SK-N-SH (cell line): ENCODE measurements at regions of chr1 and their contacts with region 1.

Region 1: DNA sequence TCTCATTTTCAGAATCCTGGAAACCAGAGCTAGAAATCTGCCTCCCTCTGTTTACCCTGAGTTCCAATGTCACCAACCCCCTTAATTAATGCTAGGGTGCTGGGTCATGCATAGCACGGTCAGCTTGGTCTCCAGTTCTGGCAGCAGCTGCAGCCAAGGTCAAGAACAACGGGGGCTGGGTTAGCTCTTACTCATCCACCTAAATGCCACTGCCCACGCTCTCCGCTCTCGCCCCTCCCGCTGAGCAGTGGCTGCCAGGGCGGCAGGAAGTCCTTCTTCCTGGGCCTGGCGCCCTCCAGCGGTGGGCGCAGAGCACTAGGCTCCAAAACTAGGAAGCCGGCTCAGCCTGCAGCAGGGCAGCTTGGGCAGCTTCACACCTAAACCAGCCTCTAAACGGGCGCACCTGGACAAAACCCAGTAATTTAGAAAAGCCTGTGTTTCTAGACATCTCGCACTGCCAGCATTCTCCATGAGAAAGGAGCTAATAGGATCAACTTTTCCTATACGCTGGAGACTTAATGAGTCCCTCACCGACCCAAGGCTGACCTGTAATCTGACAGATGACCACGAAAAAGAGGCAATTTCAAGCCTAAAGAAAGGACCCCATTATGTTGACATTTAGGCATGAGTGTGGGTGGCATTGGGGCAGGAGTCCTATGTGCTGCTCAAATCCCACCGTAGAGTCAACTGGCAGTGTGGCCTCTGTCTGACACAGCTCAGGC is 78.3 kb upstream of the LRRN2 start:
- DNase-seq: peak; percentile 81
- H3K4me3 ChIP-seq: peak overlapping the region in 1 of 2 experiments; percentile 7; a peak in 1 of 4 replicates
- H3K27ac ChIP-seq: no peak overlapping the region
- H3K4me1 ChIP-seq: peaks cover 0 to 9% of the 10 kb centered on the region in 2 experiments; a peak in 1 of 4 replicates
- H3K27me3 ChIP-seq: peaks cover 2% of the 10 kb centered on the region; the same call in 1 of the 2 replicates
- CTCF ChIP-seq: peak; percentile 73
- EP300 ChIP-seq: no peak
- RAD21 ChIP-seq: peak; percentile 82

Region 2: GRCh38 chr1:204565617-204566582 is 198.0 kb before region 1 on chr1:
- CTCF ChIA-PET with region 1: interaction called, 148 read pairs
- POLR2A ChIA-PET with region 1: no interaction called
- DNase-seq: peak; percentile 89
- H3K4me3 ChIP-seq: no peak overlapping the region; a peak in 1 of 4 replicates
- H3K27ac ChIP-seq: no peak overlapping the region
- H3K4me1 ChIP-seq: no peaks in the 10 kb centered on the region; a peak in 1 of 4 replicates
- H3K27me3 ChIP-seq: no peaks in the 10 kb centered on the region
- CTCF ChIP-seq: peak; percentile 82
- EP300 ChIP-seq: no peak
- RAD21 ChIP-seq: peak; percentile 94

Region 3: DNA sequence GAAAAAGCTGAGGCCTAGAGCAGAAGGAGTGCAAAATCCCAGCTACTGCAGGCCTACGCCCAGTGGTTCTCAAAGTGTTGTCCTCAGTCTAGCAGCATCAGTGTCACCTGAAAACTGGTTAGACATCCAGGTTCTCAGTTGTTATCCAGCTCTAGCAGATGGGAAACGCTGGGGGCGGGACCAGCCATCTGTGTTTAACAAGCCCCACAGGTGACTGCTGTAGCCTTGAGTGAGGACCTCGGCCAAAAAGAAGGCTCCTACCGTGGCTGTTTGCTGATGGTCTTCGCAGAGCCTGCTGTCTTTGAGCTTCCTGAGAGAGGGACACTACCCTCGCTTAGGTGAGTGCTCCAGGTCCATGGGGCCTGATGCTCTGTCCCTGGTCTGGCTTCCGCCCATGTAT is 148.0 kb before region 1 on chr1:
- CTCF ChIA-PET with region 1: interaction called, 11 read pairs
- POLR2A ChIA-PET with region 1: no interaction called
- DNase-seq: no peak
- H3K4me3 ChIP-seq: no peak overlapping the region
- H3K27ac ChIP-seq: no peak overlapping the region
- H3K4me1 ChIP-seq: no peaks in the 10 kb centered on the region
- H3K27me3 ChIP-seq: peaks cover 27% of the 10 kb centered on the region; the same call in 1 of the 2 replicates
- CTCF ChIP-seq: no peak
- EP300 ChIP-seq: no peak
- RAD21 ChIP-seq: no peak

Region 4: DNA sequence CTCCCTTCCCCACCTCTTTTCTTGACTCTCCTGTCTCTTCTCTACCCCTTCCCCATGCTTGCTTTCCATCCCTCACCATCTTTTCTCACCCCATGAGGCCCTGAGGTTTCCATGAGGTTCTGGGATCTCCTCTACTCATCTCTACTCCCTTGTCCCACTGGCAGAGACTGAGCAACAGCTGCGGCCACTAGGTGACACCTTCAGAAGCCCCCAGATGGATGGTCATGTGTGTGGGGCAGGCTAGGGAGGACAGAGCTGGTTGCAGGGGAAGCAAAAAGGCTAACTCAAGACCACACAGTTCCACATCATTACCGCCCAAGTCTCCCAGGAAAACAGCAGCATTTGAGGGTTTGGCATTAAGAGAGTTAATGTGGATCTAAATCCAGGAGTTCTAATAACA is 123.3 kb before region 1 on chr1:
- CTCF ChIA-PET with region 1: interaction called, 15 read pairs
- POLR2A ChIA-PET with region 1: no interaction called
- DNase-seq: no peak
- H3K4me3 ChIP-seq: no peak overlapping the region
- H3K27ac ChIP-seq: no peak overlapping the region
- H3K4me1 ChIP-seq: peaks cover 0 to 20% of the 10 kb centered on the region in 2 experiments; a peak in 2 of 4 replicates
- H3K27me3 ChIP-seq: no peaks in the 10 kb centered on the region; the same call in 1 of the 2 replicates
- CTCF ChIP-seq: no peak
- EP300 ChIP-seq: no peak
- RAD21 ChIP-seq: no peak

Region 5: DNA sequence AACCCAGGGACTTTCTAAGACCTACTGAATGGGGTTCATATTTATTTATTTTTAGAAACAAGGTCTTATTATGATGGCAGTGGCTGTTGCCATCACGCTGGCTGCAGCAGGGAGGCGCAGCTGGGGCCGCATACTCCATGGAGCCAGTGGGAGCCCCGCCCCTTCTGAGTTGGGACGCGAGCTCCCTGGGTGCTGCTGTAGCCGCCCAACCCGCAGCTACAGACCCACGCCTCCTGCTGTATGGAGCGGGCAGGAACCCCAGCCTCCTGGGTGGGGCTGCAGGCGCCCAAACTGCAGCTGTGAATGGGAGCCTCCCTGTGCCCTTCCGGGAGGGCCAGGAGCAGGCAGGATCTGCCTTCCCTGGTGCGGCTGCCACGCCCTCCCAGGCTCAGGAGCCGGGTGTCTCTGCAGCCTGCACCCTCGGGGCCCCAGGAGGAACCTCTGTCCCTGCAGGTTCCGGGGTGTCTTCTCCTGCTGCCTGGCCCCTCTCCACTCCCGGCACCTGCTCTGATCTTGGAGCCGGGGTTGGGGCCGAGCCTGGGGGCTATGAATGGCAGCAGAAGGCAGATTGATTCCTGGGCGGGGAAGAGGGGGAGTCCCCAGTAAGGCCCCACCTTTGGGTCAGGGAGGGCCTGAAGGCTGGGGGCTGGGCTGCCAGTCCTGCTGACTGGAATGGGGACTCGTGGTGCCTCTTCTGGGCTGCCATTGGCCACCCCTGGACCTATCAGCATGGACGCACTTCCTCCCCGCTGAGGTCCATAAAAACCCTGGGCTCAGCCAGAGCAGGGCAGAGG is 11.8 kb before region 1 on chr1:
- CTCF ChIA-PET with region 1: interaction called, 57 read pairs
- POLR2A ChIA-PET with region 1: no interaction called
- DNase-seq: no peak
- H3K4me3 ChIP-seq: no peak overlapping the region
- H3K27ac ChIP-seq: no peak overlapping the region
- H3K4me1 ChIP-seq: peaks cover 0 to 4% of the 10 kb centered on the region in 2 experiments; a peak in 1 of 4 replicates
- H3K27me3 ChIP-seq: no peaks in the 10 kb centered on the region
- CTCF ChIP-seq: no peak
- EP300 ChIP-seq: no peak
- RAD21 ChIP-seq: no peak

Region 6: GRCh38 chr1:204791453-204792353 is 27.8 kb after region 1 on chr1:
- CTCF ChIA-PET with region 1: interaction called, 30 read pairs
- POLR2A ChIA-PET with region 1: no interaction called
- DNase-seq: peak; percentile 75
- H3K4me3 ChIP-seq: peak overlapping the region in 1 of 2 experiments; percentile 42; a peak in 1 of 4 replicates
- H3K27ac ChIP-seq: no peak overlapping the region
- H3K4me1 ChIP-seq: peaks cover 0 to 5% of the 10 kb centered on the region in 2 experiments; a peak in 2 of 4 replicates
- H3K27me3 ChIP-seq: peaks cover 26% of the 10 kb centered on the region; the same call in 1 of the 2 replicates
- CTCF ChIP-seq: peak; percentile 85
- EP300 ChIP-seq: no peak
- RAD21 ChIP-seq: peak; percentile 25; the same call in 1 of the 2 replicates